AG04450 (cell line): ENCODE measurements at regions of chr15 and their contacts with region 1.

Region 1: DNA sequence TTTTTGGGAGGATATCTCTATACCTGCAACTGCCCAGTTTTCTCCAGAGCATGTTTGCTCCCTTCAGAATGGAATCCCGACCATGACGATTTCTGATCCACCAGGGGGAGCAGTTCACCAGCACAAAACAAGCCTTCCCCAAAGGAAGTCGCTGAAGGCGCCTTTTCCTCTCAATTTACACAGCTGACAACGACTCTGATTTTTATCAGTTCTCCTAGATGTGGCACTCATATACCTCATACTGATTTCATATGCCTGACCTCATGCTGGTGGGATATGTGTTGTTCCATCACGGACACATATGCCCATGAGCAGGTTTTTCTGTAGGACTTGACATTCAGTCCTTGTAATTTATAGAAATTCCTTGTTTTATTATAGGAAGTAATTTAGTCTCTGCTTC is 1028.2 kb downstream of the MCTP2 start:
- DNase-seq: peak; percentile 62
- H3K4me3 ChIP-seq: no peak overlapping the region
- H3K27ac ChIP-seq: no peak overlapping the region
- H3K27me3 ChIP-seq: no peaks in the 10 kb centered on the region
- CTCF ChIP-seq: peak; percentile 82

Region 2: GRCh38 chr15:95025924-95026728 is 233.4 kb before region 1 on chr15:
- CTCF ChIA-PET with region 1: interaction called, 23 read pairs
- POLR2A ChIA-PET with region 1: no interaction called
- DNase-seq: peak; percentile 33
- H3K4me3 ChIP-seq: no peak overlapping the region
- H3K27ac ChIP-seq: no peak overlapping the region
- H3K27me3 ChIP-seq: no peaks in the 10 kb centered on the region
- CTCF ChIP-seq: peak; percentile 85

Region 3: GRCh38 chr15:95277266-95277665 is 17.8 kb after region 1 on chr15:
- CTCF ChIA-PET with region 1: interaction called, 23 read pairs
- POLR2A ChIA-PET with region 1: interaction called, 5 read pairs
- DNase-seq: peak; percentile 91
- H3K4me3 ChIP-seq: no peak overlapping the region
- H3K27ac ChIP-seq: peak overlapping the region; percentile 22
- H3K27me3 ChIP-seq: no peaks in the 10 kb centered on the region
- CTCF ChIP-seq: no peak

Region 4: DNA sequence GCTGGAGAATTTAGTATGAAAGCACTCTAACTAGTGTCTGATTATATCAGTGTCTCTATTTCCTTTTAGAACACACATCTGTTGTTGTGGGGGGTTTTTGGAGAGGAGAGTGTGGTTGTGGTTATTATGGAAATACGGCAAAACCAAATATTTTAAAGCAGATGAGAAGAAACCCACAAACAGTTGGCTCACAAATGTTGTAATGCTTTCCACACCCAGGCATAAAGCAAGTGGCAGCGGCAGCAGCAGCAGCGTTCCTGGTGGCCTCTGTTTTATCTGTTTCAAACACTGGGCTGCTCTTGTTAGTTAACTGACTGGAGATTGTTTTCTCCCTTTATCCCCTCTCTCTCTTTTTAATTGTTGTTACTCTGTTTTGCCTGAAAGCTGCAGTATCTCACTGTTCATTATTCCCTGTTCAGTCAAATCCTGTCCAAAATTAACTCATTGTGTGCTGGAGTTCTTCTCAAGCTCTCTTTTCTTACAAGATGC is 25.5 kb after region 1 on chr15:
- CTCF ChIA-PET with region 1: interaction called, 41 read pairs
- POLR2A ChIA-PET with region 1: no interaction called
- DNase-seq: no peak
- H3K4me3 ChIP-seq: no peak overlapping the region
- H3K27ac ChIP-seq: no peak overlapping the region
- H3K27me3 ChIP-seq: no peaks in the 10 kb centered on the region
- CTCF ChIP-seq: peak; percentile 28; the same call in 1 of the 2 replicates

Region 5: GRCh38 chr15:95291898-95292472 is 32.5 kb after region 1 on chr15:
- CTCF ChIA-PET with region 1: interaction called, 41 read pairs
- POLR2A ChIA-PET with region 1: no interaction called
- DNase-seq: no peak
- H3K4me3 ChIP-seq: no peak overlapping the region
- H3K27ac ChIP-seq: no peak overlapping the region
- H3K27me3 ChIP-seq: no peaks in the 10 kb centered on the region
- CTCF ChIP-seq: peak; percentile 67

Region 6: DNA sequence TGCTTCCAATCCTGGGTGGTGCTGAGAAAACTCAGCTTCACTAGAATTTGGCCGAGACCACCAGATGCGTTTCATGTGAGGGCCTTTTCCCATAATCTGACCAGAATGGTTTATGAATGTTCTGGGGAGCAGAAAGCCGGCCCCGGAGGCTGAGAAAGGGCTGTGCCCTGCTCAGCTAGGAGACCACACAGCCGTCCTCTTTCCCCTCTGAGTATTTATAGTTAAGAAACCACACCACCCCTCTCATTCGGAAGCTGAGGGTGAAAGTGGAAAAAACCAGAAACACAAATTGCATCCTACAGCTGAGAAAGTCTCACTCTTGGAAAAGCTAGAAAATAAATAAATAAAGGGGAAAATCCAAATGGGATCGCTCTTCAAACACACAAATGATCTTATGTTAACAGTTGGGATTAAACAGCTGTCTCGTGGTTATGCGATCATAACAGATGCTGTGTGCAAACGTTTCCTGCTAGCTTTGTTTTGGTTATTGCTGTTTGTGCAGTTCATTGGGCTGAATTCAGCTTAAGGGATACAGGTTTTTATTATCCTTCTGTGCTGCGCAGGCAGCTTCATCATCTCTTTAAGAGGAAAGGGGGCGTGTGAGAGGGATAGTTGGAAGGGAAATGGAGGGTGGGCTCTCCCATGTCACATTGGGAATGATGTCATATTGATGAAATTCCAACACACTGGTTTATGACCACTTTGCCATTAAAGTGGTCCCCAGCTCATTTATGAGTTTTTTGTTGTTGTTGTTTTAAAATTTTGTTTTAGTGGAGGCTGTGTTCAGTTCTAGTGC is 44.8 kb after region 1 on chr15:
- CTCF ChIA-PET with region 1: interaction called, 11 read pairs
- POLR2A ChIA-PET with region 1: no interaction called
- DNase-seq: peak; percentile 91
- H3K4me3 ChIP-seq: no peak overlapping the region; the same call in none of the 2 replicates
- H3K27ac ChIP-seq: peak overlapping the region; percentile 77
- H3K27me3 ChIP-seq: no peaks in the 10 kb centered on the region
- CTCF ChIP-seq: no peak

Region 7: DNA sequence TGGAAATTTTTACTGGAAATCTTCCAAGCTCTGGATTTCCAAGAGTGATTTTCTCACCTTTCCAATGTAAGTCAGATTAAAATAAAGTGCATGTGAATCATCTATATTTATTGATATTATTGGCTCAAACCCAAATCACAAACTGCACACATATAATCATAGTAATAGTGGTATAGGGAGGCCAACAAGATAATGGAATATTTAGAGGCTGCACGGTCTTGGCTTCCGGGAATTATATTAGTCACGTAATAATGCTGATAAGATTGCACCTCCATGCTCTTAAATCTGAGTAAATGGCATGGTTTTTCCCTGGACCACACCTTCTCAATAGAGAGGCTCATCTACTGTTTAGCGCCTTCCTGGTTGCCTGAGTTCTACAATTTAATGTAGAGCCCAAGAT is 503.9 kb after region 1 on chr15:
- CTCF ChIA-PET with region 1: interaction called, 10 read pairs
- POLR2A ChIA-PET with region 1: no interaction called
- DNase-seq: no peak
- H3K4me3 ChIP-seq: no peak overlapping the region
- H3K27ac ChIP-seq: no peak overlapping the region
- H3K27me3 ChIP-seq: no peaks in the 10 kb centered on the region
- CTCF ChIP-seq: no peak